ENCODE measurements at regions of chr4 and their contacts with region 1.

Region 1: GRCh38 chr4:41432881-41433280 is 105.1 kb upstream of the LIMCH1 start:
- DNase-seq: peak; percentile 82
- H3K4me3 ChIP-seq: no peak overlapping the region
- H3K27ac ChIP-seq: no peak overlapping the region
- H3K4me1 ChIP-seq: peaks cover 33% of the 10 kb centered on the region
- H3K27me3 ChIP-seq: no peaks in the 10 kb centered on the region
- CTCF ChIP-seq: no peak

Region 2: GRCh38 chr4:41477200-41477910 is 44.5 kb after region 1 on chr4:
- CTCF ChIA-PET with region 1: no interaction called
- POLR2A ChIA-PET with region 1: no interaction called
- intact Hi-C with region 1: loop called (anchors 2 kb)
- DNase-seq: no peak
- H3K4me3 ChIP-seq: no peak overlapping the region
- H3K27ac ChIP-seq: no peak overlapping the region
- H3K4me1 ChIP-seq: peaks cover 26% of the 10 kb centered on the region
- H3K27me3 ChIP-seq: no peaks in the 10 kb centered on the region
- CTCF ChIP-seq: no peak

Measured in A673 (cell line).